A673 (cell line): ENCODE measurements at regions of chr2 and their contacts with region 1.

Region 1: DNA sequence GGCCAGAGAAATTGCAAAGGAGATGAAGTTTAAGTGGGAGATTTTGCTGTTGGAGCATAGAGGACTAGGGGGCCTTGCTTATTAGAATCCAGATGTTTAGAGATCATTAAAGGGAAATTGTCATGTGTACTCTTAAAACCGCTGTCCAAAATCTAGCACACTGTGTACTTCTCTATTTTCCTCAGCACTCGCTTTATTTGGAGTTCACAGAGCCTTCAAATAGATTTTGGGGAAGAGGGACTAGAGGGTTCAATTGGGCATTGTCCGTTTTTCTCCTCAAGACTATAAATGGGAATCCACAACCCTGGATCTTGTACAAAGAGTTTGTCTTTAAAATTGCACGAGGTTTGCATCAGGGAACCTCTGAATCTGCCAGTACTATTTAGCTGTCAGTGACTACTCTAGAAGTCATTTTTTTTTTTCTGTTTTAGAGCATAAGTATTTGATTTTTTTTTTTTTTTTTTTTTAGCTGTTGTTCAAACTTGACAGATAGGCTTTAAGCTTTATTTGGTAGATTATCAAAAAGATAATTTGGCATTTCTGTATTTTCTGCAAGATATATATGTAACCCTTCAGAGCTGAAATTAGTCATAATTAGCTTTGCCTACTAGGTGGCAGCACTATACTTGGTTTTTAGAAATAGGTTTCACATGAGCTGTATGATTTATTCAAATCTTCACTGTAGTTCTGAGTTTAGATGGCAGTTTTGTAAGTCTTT is 14.2 kb downstream of the PMS1 start:
- DNase-seq: peak; percentile 48
- H3K4me3 ChIP-seq: no peak overlapping the region
- H3K27ac ChIP-seq: no peak overlapping the region
- H3K4me1 ChIP-seq: peaks cover 4% of the 10 kb centered on the region
- H3K27me3 ChIP-seq: no peaks in the 10 kb centered on the region
- CTCF ChIP-seq: peak; percentile 68

Region 2: GRCh38 chr2:189913821-189914220 is 115.3 kb after region 1 on chr2:
- CTCF ChIA-PET with region 1: interaction called, 15 read pairs
- POLR2A ChIA-PET with region 1: no interaction called
- intact Hi-C with region 1: no loop called
- DNase-seq: no peak
- H3K4me3 ChIP-seq: no peak overlapping the region
- H3K27ac ChIP-seq: no peak overlapping the region
- H3K4me1 ChIP-seq: no peaks in the 10 kb centered on the region
- H3K27me3 ChIP-seq: no peaks in the 10 kb centered on the region
- CTCF ChIP-seq: no peak

Region 3: DNA sequence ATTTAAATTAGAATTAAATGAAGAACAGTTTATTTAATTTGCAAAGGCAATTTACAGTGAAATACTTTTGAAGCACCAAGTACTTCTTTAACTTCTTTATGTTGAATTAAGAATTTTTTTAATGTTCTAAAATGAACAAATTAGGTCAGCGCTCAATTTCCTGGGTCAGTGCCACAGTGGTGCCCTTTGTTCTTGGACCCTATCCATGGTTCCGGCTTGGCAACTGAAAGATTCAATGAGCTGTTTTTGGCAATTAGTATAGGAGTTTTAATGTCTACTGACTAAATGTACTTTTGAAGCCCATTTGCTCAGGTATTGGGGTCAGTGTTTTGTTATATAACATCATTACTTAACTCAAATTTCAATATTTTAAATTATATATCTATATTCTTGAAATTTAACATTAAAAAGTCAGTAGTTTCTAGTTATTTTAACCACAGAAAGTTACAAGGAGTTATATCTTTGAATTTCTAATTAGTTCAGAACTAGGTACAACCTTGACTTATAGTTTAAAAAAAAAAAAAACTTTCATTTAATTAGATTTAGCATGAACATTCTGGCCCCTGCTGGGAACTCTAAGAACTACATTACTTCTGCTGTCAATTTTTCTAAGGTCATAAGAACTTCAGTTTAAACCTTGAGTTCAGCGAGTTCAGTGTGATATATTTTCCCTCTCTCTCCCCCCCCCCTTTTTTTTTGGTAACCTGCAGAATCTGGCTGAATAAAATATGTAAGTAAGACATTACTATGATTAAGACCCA is 271.6 kb after region 1 on chr2:
- CTCF ChIA-PET with region 1: interaction called, 3 read pairs
- POLR2A ChIA-PET with region 1: no interaction called
- intact Hi-C with region 1: loop called (anchors 5 kb)
- DNase-seq: peak; percentile 73
- H3K4me3 ChIP-seq: no peak overlapping the region
- H3K27ac ChIP-seq: no peak overlapping the region
- H3K4me1 ChIP-seq: peaks cover 4% of the 10 kb centered on the region
- H3K27me3 ChIP-seq: no peaks in the 10 kb centered on the region
- CTCF ChIP-seq: peak; percentile 68

Region 4: GRCh38 chr2:190319555-190320498 is 521.4 kb after region 1 on chr2 and contains the start of gene HIBCH:
- CTCF ChIA-PET with region 1: no interaction called
- POLR2A ChIA-PET with region 1: no interaction called
- intact Hi-C with region 1: loop called (anchors 10 kb)
- DNase-seq: peak; percentile 100
- H3K4me3 ChIP-seq: peak within 1 kb of the TSS; percentile 81
- H3K27ac ChIP-seq: peak within 1 kb of the TSS; percentile 73
- H3K4me1 ChIP-seq: peaks cover 11% of the 10 kb centered on the region
- H3K27me3 ChIP-seq: no peaks in the 10 kb centered on the region
- CTCF ChIP-seq: peak; percentile 94
- total RNA-seq, gene HIBCH: 43.3 and 45.7 TPM in 2 replicates